ENCODE measurements at regions of chr20 and their contacts with region 1.

Region 1: DNA sequence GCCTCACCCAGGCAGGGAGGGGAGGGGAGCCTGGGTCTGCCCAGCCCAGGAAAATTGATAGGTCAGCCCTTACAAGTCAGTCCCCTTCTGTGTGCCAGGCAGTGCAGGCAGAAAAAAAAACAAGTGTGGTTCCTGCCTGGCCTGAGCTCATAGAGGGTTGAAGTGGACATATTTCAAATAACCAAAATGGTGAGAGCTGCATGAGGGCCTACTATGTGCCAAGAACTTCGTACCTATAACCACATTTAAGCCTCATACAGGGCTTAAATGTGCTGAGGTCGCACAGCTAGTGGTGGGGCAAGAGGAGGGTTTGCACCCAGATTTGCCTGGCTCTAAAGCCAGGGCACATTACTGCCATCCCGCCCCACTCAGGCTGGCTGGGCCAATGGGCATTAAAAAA is 6.9 kb upstream of the NOL4L start:
- DNase-seq: no peak
- H3K27ac ChIP-seq: no peak overlapping the region
- CTCF ChIP-seq: no peak

Region 2: DNA sequence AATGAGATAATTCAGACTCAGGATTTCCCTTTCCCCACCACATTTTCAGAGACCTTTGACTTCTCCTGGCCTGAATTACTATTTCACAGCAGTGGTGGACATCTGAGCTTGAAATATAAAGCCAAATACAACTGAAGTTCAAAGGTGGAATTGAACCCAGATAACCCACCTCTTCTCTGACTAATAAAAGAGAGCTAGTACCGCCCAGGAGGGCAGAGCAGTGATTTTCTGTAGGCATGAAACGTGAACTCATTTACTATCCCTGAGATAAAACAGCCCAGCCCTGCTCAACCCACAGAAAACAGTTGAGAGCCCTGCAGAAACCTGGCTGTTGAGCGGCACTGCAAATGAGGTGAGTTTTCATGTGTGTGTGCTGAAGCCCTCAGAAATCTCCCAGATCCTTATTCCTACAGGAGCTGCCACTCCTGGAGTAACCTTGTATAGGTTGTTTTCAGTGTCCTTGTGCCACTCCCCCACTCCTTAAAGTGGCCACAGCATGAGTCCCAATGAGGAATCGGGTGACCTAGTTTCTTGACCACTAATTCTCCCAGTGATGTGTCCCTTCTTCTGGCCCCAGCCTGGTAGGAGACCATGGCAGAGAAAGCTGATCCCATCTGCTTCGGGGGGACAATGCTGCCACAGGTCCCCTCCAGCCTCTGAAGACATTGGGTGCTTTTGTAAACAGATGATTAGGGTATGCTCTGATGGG is 106.1 kb before region 1 on chr20:
- CTCF ChIA-PET with region 1: no interaction called
- POLR2A ChIA-PET with region 1: no interaction called
- DNase-seq: no peak
- H3K27ac ChIP-seq: no peak overlapping the region
- CTCF ChIP-seq: no peak

Region 3: GRCh38 chr20:32538526-32538939 is 53.5 kb before region 1 on chr20:
- CTCF ChIA-PET with region 1: no interaction called
- POLR2A ChIA-PET with region 1: interaction called, 10 read pairs
- DNase-seq: no peak
- H3K27ac ChIP-seq: no peak overlapping the region
- CTCF ChIP-seq: no peak

Region 4: DNA sequence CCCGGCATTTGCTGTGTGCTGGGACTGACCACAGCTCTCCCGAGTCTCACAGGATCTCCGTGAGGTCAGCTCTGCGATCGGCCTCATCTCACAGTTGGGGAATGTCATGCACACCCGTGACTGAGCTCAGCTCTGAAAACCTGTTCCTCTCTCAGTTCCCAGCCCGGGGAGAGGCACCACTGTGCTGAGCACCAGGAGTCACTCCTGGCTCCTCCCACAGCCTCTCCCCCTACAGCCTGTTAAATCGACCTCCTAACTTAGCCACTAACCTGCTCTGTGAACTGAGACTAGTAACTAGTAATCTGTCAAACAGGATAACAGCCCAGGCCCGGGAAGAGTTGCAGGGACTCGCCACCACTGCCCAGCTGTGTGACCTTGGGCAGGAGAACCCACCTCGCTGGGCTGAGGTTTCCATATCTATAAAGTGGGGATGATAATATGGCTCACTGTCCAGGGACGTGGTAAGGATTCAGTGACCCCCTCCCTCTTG is 13.2 kb after region 1 on chr20:
- CTCF ChIA-PET with region 1: no interaction called
- POLR2A ChIA-PET with region 1: interaction called, 10 read pairs
- DNase-seq: no peak
- H3K27ac ChIP-seq: no peak overlapping the region
- CTCF ChIP-seq: no peak

Measured in RWPE1 (cell line).